ENCODE measurements at regions of chr16 and their contacts with region 1.

Region 1: GRCh38 chr16:66552286-66553177 is at the start of gene CKLF:
- DNase-seq: peak; percentile 91
- H3K4me3 Mint-ChIP-seq: peak within 1 kb of the TSS; percentile 96
- H3K27ac Mint-ChIP-seq: peak within 1 kb of the TSS; percentile 95
- H3K4me1 Mint-ChIP-seq: peaks cover 77% of the 10 kb centered on the region
- H3K27me3 Mint-ChIP-seq: no peaks in the 10 kb centered on the region
- total RNA-seq, gene CKLF: 124 to 132 TPM

Region 2: GRCh38 chr16:66521951-66522771 is 30.4 kb before region 1 on chr16:
- CTCF ChIA-PET with region 1: interaction called, 29 read pairs
- POLR2A ChIA-PET with region 1: interaction called, 4 read pairs
- DNase-seq: peak; percentile 88
- H3K4me3 Mint-ChIP-seq: peak overlapping the region; percentile 59
- H3K27ac Mint-ChIP-seq: peak overlapping the region; percentile 95
- H3K4me1 Mint-ChIP-seq: peaks cover 86% of the 10 kb centered on the region
- H3K27me3 Mint-ChIP-seq: no peaks in the 10 kb centered on the region

Region 3: DNA sequence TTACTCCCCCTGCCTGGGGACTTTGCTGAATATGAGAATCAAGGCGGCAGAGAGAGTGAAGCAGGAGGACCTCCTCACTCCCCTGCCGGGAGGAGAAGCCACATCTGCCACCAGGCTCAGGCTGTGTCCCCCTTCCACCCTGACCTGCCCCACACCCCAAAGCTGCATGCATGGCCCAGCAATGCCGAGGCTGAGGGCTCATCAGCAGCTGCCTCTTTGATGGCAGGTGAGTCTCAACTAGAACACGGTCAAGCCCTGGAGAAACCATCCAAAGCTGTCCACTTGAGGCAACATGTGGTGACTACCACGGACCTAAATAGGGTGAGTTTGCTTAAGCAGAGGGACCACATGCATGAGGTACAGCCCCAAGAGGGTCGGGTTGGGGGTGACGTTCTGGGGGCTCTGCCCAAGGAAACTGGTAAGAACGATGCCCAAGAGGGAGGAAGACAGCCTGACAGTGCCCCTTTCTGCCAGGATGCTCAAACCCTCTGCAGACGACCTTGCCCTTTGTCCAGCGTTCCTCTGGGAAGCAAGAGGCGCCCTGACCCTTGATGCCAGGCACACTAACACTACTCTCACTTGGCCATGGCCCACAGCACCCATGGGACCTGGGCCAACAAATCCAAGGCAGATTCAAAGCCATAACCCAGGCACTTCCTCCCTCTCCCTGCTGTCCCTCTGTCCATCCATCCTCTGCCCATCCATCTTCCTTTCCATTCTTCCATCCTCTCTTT is 23.2 kb before region 1 on chr16:
- CTCF ChIA-PET with region 1: interaction called, 29 read pairs
- POLR2A ChIA-PET with region 1: no interaction called
- DNase-seq: no peak
- H3K4me3 Mint-ChIP-seq: no peak overlapping the region
- H3K27ac Mint-ChIP-seq: peak overlapping the region; percentile 34
- H3K4me1 Mint-ChIP-seq: peaks cover 36% of the 10 kb centered on the region
- H3K27me3 Mint-ChIP-seq: no peaks in the 10 kb centered on the region

Region 4: GRCh38 chr16:66541388-66542355 is 10.9 kb before region 1 on chr16:
- CTCF ChIA-PET with region 1: interaction called, 13 read pairs
- POLR2A ChIA-PET with region 1: no interaction called
- DNase-seq: no peak
- H3K4me3 Mint-ChIP-seq: no peak overlapping the region
- H3K27ac Mint-ChIP-seq: no peak overlapping the region
- H3K4me1 Mint-ChIP-seq: peaks cover 29% of the 10 kb centered on the region
- H3K27me3 Mint-ChIP-seq: no peaks in the 10 kb centered on the region

Region 5: DNA sequence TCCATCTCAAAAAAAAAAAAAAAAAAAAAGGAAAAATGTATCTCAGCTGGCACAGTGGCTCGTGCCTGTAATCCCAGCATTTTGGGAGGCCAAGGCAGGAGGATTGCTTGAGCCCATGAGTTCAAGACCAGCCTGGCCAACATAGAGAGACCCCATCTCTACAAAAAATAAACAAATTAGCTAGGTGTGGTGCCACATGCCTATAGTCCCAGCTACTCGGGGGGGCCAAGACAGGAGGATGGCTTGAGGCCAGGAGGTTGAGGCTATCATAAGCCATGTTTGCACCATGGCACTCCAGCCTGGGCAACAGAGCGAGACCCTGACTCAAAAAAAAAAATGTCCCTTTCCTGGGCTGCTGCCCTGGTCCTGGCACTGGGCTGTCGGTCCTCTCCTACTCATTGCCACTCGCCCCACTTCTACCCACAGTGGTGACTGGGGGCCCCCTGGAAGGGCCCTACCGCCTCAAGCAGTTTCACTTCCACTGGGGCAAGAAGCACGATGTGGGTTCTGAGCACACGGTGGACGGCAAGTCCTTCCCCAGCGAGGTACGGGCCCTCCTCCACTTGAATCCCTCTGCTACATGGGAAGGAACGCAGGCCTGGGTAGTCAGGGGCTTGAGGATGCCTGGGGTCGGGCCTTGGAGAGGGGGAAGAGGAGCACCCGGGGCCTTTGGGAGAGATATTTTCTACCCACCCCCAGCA is 297.7 kb after region 1 on chr16:
- CTCF ChIA-PET with region 1: no interaction called
- POLR2A ChIA-PET with region 1: no interaction called
- DNase-seq: no peak
- H3K4me3 Mint-ChIP-seq: no peak overlapping the region
- H3K27ac Mint-ChIP-seq: no peak overlapping the region
- H3K4me1 Mint-ChIP-seq: peaks cover 21% of the 10 kb centered on the region
- H3K27me3 Mint-ChIP-seq: peaks cover 18% of the 10 kb centered on the region

Measured in activated CD4-positive, alpha-beta T cell treated with anti-CD3 and anti-CD28 coated beads, Interleukin-2, amount 10 ng/mL, durations not matched to agents 7 days and 5 days (primary cell).